PC-3 (cell line): ENCODE measurements at regions of chr9 and their contacts with region 1.

Region 1: DNA sequence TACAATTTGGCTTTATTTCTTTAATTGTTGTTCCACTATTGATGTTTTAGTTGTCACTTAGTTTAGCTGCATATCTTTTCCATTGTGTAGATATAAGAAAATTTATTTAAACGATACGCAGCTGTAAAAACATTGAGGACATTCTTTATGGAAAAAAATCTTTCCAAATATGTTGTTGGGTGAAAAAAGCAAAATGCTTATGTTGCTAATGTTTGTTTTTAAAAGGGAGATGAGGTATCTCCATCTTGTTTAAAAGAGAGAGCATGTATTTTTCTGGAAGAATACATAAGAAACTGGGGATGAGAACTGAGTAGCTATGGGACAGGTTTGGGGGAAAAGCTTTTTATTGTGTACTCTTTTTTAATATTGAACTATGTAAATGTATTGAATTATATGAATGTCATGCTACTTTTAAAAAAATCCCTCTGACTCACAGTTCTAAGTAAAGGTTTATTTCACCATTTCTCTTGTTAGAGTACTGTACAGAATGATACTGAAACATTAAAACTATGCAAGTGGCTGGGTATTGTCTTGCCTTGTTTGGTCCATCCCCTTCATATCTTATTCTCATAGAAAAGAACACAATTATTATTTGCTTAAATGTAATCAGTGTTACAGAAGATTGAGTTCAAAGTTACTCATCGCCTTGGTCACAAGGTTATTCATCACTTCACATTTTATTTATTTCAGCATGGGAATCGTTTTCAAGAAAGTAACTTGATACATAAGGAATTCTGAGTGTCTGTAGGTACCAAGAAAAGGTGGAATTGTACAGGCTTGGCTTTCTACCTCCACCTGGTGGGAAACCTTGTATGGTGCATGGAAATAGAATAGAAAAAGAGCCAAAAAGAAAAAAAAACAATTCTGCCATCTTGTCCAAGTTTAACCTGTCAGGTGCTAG is 85.8 kb downstream of the RIC1 start:
- DNase-seq: peak; percentile 78
- ATAC-seq: peak; percentile 39
- H3K4me3 ChIP-seq: no peak overlapping the region
- H3K27ac ChIP-seq: peak overlapping the region; percentile 60
- H3K4me1 ChIP-seq: peaks cover 27% of the 10 kb centered on the region
- H3K27me3 ChIP-seq: no peaks in the 10 kb centered on the region
- CTCF ChIP-seq: peak; percentile 70

Region 2: DNA sequence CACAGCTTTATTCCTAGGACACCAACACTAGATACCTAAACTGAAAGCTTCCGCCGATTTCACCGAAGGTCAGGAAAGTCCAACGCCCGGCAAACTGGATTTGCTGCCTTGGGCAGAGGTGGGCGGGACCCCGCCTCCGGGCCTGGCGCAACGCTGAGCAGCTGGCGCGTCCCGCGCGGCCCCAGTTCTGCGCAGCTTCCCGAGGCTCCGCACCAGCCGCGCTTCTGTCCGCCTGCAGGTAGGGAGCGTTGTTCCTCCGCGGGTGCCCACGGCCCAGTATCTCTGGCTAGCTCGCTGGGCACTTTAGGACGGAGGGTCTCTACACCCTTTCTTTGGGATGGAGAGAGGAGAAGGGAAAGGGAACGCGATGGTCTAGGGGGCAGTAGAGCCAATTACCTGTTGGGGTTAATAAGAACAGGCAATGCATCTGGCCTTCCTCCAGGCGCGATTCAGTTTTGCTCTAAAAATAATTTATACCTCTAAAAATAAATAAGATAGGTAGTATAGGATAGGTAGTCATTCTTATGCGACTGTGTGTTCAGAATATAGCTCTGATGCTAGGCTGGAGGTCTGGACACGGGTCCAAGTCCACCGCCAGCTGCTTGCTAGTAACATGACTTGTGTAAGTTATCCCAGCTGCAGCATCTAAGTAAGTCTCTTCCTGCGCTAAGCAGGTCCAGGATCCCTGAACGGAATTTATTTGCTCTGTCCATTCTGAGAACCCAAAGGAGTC is 264.2 kb before region 1 on chr9 and contains the start of gene CD274:
- CTCF ChIA-PET with region 1: no interaction called
- POLR2A ChIA-PET with region 1: no interaction called
- intact Hi-C with region 1: loop called (anchors 2 kb)
- DNase-seq: peak; percentile 92
- ATAC-seq: peak; percentile 85
- H3K4me3 ChIP-seq: peak within 1 kb of the TSS; percentile 79
- H3K27ac ChIP-seq: peak within 1 kb of the TSS; percentile 71
- H3K4me1 ChIP-seq: peaks cover 83% of the 10 kb centered on the region
- H3K27me3 ChIP-seq: no peaks in the 10 kb centered on the region
- CTCF ChIP-seq: peak; percentile 72
- total RNA-seq, gene CD274: 3.8 and 5.1 TPM in 2 replicates

Region 3: DNA sequence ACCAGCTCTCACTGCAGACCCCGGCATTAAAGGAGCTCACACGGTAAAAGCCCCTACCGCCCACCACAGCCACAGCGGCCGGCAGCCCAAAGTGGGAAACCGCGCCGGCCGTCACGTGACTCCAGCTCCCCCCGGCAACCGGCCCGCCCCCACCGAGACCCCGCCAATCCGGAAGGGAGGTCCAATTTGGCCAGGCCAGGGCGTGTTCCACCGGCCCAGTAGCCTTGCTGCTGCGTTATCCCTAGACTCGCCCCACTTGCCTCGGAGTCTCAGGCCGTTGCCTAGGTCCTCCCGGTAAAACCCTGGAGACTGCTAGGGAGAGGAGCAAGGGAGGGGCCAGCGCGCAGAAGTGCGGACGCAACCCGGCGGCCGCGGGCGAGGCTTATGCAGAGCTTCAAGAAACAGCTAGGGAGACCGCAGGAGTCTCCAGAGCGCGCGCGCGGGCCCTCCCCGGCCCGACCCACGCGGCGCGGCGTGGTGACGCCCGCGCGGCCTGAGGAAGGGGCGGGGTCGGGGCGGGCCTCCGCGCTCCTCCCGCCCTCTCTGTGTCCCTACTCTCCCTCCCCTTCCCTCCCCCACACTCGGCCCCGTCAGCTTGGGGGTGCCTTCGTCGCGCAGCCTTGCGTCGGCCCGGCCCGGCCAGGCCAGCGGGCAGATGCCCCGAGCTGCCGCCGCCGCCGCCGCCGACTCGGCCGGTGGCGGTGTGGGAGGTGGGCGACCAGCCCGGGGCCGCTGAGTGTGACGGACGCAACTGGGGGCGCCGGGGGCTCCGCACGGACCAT is 86.0 kb before region 1 on chr9 and contains the start of gene RIC1:
- CTCF ChIA-PET with region 1: no interaction called
- POLR2A ChIA-PET with region 1: no interaction called
- intact Hi-C with region 1: loop called (anchors 2 kb)
- DNase-seq: peak; percentile 85
- ATAC-seq: peak; percentile 83
- H3K4me3 ChIP-seq: peak within 1 kb of the TSS; percentile 76
- H3K27ac ChIP-seq: peak within 1 kb of the TSS; percentile 81
- H3K4me1 ChIP-seq: peaks cover 44% of the 10 kb centered on the region
- H3K27me3 ChIP-seq: no peaks in the 10 kb centered on the region
- CTCF ChIP-seq: no peak
- total RNA-seq, gene RIC1: 13.3 and 16.0 TPM in 2 replicates

Region 4: DNA sequence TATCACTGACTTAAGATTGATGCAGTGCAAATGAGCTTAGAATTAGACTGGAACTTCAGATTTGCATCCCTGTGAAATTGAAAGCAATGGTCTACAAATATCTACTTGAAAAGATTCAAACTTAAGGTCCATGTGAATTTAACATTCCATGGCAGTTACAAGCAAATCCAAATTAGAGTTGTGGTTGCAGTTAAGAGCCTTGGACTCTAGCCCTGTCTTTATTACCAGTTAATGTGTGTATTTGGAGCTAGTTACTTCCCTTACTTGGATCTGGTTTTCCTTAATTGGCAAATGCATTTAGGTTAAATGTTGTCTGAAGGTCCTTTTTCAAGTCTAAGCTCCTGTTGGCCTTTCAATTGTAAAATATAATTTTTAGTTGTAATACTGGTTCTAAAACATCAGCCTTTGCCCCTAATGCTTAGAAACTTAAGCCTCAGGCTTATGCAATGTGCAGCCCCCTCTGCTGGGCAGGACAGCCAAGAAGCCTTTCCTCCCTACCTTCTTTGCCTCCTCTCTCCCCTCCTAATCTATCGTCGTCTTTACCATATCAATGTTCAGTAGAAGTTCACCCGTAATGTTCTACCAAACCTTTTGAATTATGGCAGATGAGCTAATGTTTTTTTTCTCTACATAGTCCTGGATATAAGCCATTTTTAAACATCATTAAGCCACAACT is 58.7 kb after region 1 on chr9:
- CTCF ChIA-PET with region 1: no interaction called
- POLR2A ChIA-PET with region 1: no interaction called
- intact Hi-C with region 1: loop called (anchors 10 kb)
- DNase-seq: no peak
- ATAC-seq: peak; percentile 13; the same call in 1 of the 2 replicates
- H3K4me3 ChIP-seq: no peak overlapping the region
- H3K27ac ChIP-seq: no peak overlapping the region
- H3K4me1 ChIP-seq: no peaks in the 10 kb centered on the region
- H3K27me3 ChIP-seq: no peaks in the 10 kb centered on the region
- CTCF ChIP-seq: no peak

Region 5: GRCh38 chr9:5869315-5870019 is 154.7 kb after region 1 on chr9:
- CTCF ChIA-PET with region 1: no interaction called
- POLR2A ChIA-PET with region 1: no interaction called
- intact Hi-C with region 1: no loop called
- DNase-seq: peak; percentile 23
- ATAC-seq: no peak; the same call in 1 of the 2 replicates
- H3K4me3 ChIP-seq: no peak overlapping the region
- H3K27ac ChIP-seq: no peak overlapping the region
- H3K4me1 ChIP-seq: no peaks in the 10 kb centered on the region
- H3K27me3 ChIP-seq: no peaks in the 10 kb centered on the region
- CTCF ChIP-seq: peak; percentile 59